Naive thymus-derived CD4-positive, alpha-beta T cell (primary cell): ENCODE measurements at regions of chr4 and their contacts with region 1.

Region 1: DNA sequence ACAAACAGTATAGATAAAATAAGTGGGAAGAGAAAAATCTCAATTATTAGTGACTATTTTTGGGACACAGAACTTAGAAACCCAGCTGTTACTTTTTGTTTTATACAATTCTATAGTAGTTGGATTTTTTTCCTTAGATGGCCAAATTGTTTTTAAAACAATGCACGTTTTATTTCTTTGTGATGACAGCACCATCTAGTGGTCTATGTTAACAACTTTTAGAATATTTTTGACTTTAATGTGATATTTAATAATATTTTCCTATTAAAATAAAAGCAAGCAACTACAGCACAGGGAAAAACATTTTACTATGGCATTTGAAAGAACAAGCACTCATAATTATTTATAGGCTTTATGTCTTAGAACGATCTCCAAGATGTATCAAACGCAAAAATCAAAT is 5.6 kb upstream of the SMIM31 start:
- DNase-seq: peak in 1 of 9 donors; percentile 8
- ATAC-seq: no peak
- H3K4me3 ChIP-seq: no peak overlapping the region
- H3K4me3 Mint-ChIP-seq: no peak overlapping the region
- H3K27ac ChIP-seq: no peak overlapping the region
- H3K27ac Mint-ChIP-seq: no peak overlapping the region
- H3K4me1 ChIP-seq: no peaks in the 10 kb centered on the region
- H3K4me1 Mint-ChIP-seq: no peaks in the 10 kb centered on the region
- H3K27me3 ChIP-seq: no peaks in the 10 kb centered on the region
- H3K27me3 Mint-ChIP-seq: peaks cover 0 to 23% (median 9%) of the 10 kb centered on the region in 5 donors

Region 2: DNA sequence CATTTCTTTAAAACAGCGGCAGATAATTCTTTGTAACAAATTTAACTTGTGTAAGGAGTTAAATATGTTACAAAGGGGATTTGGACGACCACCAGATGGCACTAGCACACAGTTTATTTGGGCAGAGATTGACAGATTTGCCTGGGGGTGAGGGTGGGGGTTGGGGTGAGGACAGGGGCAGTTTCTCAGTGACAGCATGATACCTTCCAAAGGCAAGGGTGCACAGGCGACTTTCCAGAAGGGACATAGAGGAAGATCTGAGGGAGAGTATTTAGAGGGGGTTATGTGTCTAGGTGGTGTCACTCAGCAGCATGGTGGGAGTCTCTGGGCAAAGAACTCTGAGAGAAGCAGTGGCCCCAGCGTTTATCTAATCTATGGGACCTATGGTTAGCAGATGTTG is 1263.5 kb before region 1 on chr4:
- CTCF ChIA-PET with region 1: no interaction called
- POLR2A ChIA-PET with region 1: no interaction called
- intact Hi-C with region 1: loop called in 1 of 2 experiments (anchors 1 kb)
- DNase-seq: peak in 8 of 9 donors; percentile 14 to 50 (median 36)
- ATAC-seq: peak; percentile 74
- H3K4me3 ChIP-seq: no peak overlapping the region
- H3K4me3 Mint-ChIP-seq: no peak overlapping the region
- H3K27ac ChIP-seq: no peak overlapping the region
- H3K27ac Mint-ChIP-seq: no peak overlapping the region
- H3K4me1 ChIP-seq: no peaks in the 10 kb centered on the region
- H3K4me1 Mint-ChIP-seq: peaks cover 0 to 6% (median 0%) of the 10 kb centered on the region in 7 donors
- H3K27me3 ChIP-seq: no peaks in the 10 kb centered on the region
- H3K27me3 Mint-ChIP-seq: peaks cover 4 to 21% (median 10%) of the 10 kb centered on the region in 5 donors

Region 3: DNA sequence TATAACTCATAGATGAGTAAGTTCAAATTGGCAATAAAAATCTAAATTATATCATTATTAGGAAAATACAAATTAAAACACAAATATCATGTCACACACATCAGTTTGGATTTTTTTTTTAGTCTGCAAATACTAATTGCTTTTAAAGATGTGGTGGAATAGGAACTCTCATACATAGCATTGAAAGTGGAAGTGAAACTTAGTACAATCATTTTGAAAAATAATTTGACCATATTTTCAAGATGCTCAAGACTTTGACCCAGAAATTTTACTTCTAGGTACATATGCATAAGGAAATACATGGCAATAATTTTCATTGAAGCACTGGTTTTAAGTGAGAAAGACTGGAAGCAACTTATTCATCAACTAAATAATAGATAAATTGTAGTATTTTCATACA is 141.9 kb before region 1 on chr4:
- CTCF ChIA-PET with region 1: no interaction called
- POLR2A ChIA-PET with region 1: no interaction called
- intact Hi-C with region 1: no loop called
- DNase-seq: no peak
- ATAC-seq: no peak
- H3K4me3 ChIP-seq: no peak overlapping the region
- H3K4me3 Mint-ChIP-seq: no peak overlapping the region
- H3K27ac ChIP-seq: no peak overlapping the region
- H3K27ac Mint-ChIP-seq: no peak overlapping the region
- H3K4me1 ChIP-seq: no peaks in the 10 kb centered on the region
- H3K4me1 Mint-ChIP-seq: peaks cover 0 to 2% (median 0%) of the 10 kb centered on the region in 7 donors
- H3K27me3 ChIP-seq: no peaks in the 10 kb centered on the region
- H3K27me3 Mint-ChIP-seq: peaks cover 0 to 5% (median 4%) of the 10 kb centered on the region in 5 donors